ENCODE measurements at regions of chr3 and their contacts with region 1.

Region 1: GRCh38 chr3:58471025-58471887 is 20.6 kb upstream of the KCTD6 start:
- DNase-seq: peak; percentile 69
- H3K4me3 Mint-ChIP-seq: peak overlapping the region; percentile 23
- H3K27ac Mint-ChIP-seq: peak overlapping the region; percentile 92
- H3K4me1 Mint-ChIP-seq: peaks cover 55% of the 10 kb centered on the region
- H3K27me3 Mint-ChIP-seq: peaks cover 1% of the 10 kb centered on the region

Region 2: GRCh38 chr3:58482917-58483636 is 11.8 kb after region 1 on chr3:
- CTCF ChIA-PET with region 1: interaction called, 16 read pairs
- POLR2A ChIA-PET with region 1: no interaction called
- DNase-seq: no peak
- H3K4me3 Mint-ChIP-seq: no peak overlapping the region
- H3K27ac Mint-ChIP-seq: no peak overlapping the region
- H3K4me1 Mint-ChIP-seq: no peaks in the 10 kb centered on the region
- H3K27me3 Mint-ChIP-seq: peaks cover 39% of the 10 kb centered on the region

Region 3: GRCh38 chr3:58647381-58648141 is 176.3 kb after region 1 on chr3:
- CTCF ChIA-PET with region 1: no interaction called
- POLR2A ChIA-PET with region 1: no interaction called
- DNase-seq: no peak
- H3K4me3 Mint-ChIP-seq: no peak overlapping the region
- H3K27ac Mint-ChIP-seq: no peak overlapping the region
- H3K4me1 Mint-ChIP-seq: no peaks in the 10 kb centered on the region
- H3K27me3 Mint-ChIP-seq: no peaks in the 10 kb centered on the region